Activated CD4-positive, alpha-beta T cell treated with anti-CD3 and anti-CD28 coated beads, Interleukin-2, amount 10 ng/mL, durations not matched to agents 24 days and 14 days (primary cell): ENCODE measurements at regions of chr7 and their contacts with region 1.

Region 1: DNA sequence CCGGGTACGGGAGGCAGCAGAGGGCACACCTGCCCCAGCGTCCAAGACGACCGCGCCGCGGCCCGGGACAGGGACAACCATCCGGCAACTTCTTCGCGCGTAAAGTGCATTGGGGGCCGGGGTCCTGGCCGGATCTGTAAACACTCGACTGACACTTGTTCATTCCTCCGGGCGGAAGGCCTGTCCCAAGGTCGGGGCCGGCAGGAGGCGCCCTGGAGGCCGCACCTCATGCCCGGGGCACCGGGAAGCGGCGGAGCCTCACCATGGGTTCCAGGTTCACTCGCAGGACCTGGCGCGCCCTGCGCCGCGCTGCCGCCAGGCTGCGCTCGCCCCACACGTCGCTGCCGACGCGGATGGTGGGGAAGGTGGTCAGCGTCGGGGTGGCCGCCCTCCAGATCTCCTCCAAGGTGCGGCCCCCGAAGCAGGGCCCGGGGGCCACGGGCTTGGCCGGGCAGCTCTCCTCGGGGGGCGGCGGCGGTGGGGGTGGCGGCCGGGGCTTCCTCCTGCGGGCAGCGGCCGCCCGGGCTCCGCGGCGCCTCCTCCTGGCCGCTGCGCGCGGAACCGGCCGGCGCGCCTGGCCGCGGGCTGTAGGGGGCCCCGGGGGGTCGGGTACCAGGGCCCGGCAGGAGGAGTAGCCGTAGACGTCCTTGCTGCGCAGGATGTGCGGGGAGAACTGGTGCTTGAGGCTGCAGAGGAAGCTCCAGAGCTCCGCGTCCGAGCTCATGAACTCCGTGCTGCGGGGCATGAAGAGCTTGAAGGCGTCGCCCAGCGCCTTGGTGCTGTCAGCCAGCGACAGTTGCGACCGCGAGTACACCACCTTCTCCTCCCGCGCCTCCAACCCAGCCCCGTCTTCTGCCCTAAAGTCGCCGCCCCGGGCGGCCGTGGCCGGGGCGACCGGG is 746 bp downstream of the CCDC71L start:
- DNase-seq: peak; percentile 94
- H3K4me3 Mint-ChIP-seq: peak overlapping the region; percentile 88
- H3K27ac Mint-ChIP-seq: peak overlapping the region; percentile 94
- H3K4me1 Mint-ChIP-seq: peaks cover 27% of the 10 kb centered on the region
- H3K27me3 Mint-ChIP-seq: no peaks in the 10 kb centered on the region

Region 2: DNA sequence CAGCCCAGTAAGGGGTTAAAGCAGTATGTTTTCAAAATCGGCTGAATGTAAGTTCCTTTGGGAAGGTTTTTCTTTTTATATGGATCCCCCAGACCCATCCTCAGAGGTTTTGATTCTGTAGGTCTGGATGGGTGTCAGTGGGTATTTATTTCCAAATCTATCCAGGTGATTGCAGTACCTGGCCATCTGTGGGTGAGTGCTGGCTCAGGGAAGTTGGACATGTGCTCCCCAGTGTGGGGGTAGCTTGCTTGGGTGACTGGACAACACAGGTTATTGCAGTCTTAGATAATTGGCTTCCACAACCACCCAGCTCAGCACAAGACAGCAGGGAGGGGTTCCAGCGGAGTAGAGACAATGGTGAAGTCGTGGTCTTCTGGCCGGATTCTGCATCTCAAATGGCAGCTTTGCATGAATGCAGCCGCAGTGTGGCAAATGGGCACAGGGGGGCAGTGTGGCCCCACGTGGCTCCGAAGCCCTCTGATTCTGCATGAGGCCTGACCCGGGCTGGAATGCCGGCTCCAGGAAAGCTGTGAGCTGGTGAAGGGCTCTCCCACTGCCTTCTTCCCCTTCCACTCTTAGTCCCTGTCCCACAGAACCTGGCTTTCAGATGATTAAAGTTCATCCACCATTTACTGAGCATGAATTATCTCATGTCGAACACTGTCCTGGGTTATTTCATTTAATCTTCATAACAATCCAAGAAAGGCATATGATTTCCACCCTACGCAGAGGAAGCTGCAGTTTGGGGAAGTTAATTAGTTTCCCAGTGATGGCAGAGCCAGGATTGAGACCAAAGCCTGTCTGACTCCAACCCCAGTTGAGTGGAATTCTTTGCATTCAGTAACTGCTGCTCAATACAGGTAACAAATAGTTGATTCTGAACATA is 483.6 kb before region 1 on chr7:
- intact Hi-C with region 1: loop called (anchors 1 kb)
- DNase-seq: peak; percentile 91
- H3K4me3 Mint-ChIP-seq: no peak overlapping the region
- H3K27ac Mint-ChIP-seq: no peak overlapping the region
- H3K4me1 Mint-ChIP-seq: peaks cover 4% of the 10 kb centered on the region
- H3K27me3 Mint-ChIP-seq: peaks cover 22% of the 10 kb centered on the region

Region 3: DNA sequence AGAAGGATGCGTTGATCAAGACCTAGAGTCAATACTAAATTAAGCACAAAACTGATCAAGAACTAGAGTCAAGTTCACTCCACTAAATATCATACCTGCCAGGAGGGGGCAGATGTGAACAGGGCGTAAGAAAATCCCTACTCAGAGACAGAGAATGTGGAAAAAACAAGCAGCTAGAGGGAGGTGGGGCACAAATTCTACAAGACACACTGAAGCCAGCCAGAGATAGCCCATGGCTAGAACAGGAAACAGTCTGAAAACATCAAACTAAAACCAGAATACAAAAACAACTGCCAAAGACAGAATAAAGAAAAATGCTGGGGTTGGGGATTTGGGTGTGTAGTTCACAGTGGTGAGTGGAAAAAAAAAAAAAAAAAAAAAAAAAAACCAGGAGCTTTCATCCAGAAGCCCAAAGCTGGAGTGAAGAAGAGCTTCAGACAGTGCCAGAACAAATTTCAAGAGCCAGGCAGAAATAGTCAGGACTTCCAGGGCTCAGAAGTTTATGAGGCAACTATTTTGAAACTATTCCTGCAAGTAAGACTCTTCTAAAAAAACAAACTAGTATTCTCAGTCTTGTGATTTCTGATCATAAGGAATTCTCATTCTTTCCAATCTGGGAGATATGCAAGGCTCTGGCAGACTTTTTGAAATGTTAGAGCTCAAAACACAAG is 117.5 kb before region 1 on chr7:
- intact Hi-C with region 1: loop called (anchors 1 kb)
- DNase-seq: peak; percentile 75
- H3K4me3 Mint-ChIP-seq: no peak overlapping the region
- H3K27ac Mint-ChIP-seq: peak overlapping the region; percentile 4
- H3K4me1 Mint-ChIP-seq: peaks cover 8% of the 10 kb centered on the region
- H3K27me3 Mint-ChIP-seq: no peaks in the 10 kb centered on the region

Region 4: GRCh38 chr7:106717955-106718871 is 58.0 kb after region 1 on chr7:
- intact Hi-C with region 1: loop called (anchors 1 kb)
- DNase-seq: peak; percentile 85
- H3K4me3 Mint-ChIP-seq: no peak overlapping the region
- H3K27ac Mint-ChIP-seq: no peak overlapping the region
- H3K4me1 Mint-ChIP-seq: peaks cover 22% of the 10 kb centered on the region
- H3K27me3 Mint-ChIP-seq: no peaks in the 10 kb centered on the region

Region 5: GRCh38 chr7:106774768-106775551 is 114.7 kb after region 1 on chr7:
- intact Hi-C with region 1: loop called (anchors 2 kb)
- DNase-seq: no peak
- H3K4me3 Mint-ChIP-seq: no peak overlapping the region
- H3K27ac Mint-ChIP-seq: peak overlapping the region; percentile 45
- H3K4me1 Mint-ChIP-seq: peaks cover 28% of the 10 kb centered on the region
- H3K27me3 Mint-ChIP-seq: no peaks in the 10 kb centered on the region

Region 6: DNA sequence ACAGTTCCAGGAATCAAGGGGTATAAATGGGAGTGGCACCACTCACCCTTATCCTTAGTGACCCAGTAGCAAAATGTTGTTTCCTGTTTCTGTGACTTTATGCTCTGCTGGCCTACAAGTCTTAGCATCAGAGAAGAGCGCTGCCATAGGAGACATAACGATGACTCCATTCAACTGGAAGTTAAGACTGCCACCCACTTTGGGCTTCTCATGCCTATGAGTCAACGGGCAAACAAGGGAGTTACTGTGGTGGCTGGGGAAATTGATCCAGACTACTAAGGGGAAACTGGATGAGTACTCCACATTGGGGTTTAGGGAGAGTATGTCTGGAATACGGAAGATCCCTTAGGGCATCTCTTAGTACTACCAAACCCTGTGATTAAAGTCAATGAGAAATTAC is 164.2 kb after region 1 on chr7:
- intact Hi-C with region 1: no loop called
- DNase-seq: no peak
- H3K4me3 Mint-ChIP-seq: no peak overlapping the region
- H3K27ac Mint-ChIP-seq: no peak overlapping the region
- H3K4me1 Mint-ChIP-seq: no peaks in the 10 kb centered on the region
- H3K27me3 Mint-ChIP-seq: no peaks in the 10 kb centered on the region

Region 7: GRCh38 chr7:106865130-106866041 is 205.2 kb after region 1 on chr7 and contains the start of gene PIK3CG:
- intact Hi-C with region 1: loop called (anchors 1 kb)
- DNase-seq: peak; percentile 80
- H3K4me3 Mint-ChIP-seq: peak within 1 kb of the TSS; percentile 95
- H3K27ac Mint-ChIP-seq: peak within 1 kb of the TSS; percentile 93
- H3K4me1 Mint-ChIP-seq: peaks cover 42% of the 10 kb centered on the region
- H3K27me3 Mint-ChIP-seq: no peaks in the 10 kb centered on the region
- total RNA-seq, gene PIK3CG: 28.1 and 29.2 TPM in 2 replicates